IMR-90 (cell line): ENCODE measurements at regions of chr5 and their contacts with region 1.

Region 1: GRCh38 chr5:68239487-68239886 is 23.9 kb downstream of the PIK3R1 start:
- DNase-seq: peak; percentile 90
- ATAC-seq: peak; percentile 79
- H3K4me3 ChIP-seq: no peak overlapping the region
- H3K27ac ChIP-seq: no peak overlapping the region
- H3K4me1 ChIP-seq: peaks cover 5% of the 10 kb centered on the region
- H3K27me3 ChIP-seq: no peaks in the 10 kb centered on the region
- CTCF ChIP-seq: no peak
- POLR2A ChIP-seq: no peak
- RAD21 ChIP-seq: peak; percentile 14

Region 2: DNA sequence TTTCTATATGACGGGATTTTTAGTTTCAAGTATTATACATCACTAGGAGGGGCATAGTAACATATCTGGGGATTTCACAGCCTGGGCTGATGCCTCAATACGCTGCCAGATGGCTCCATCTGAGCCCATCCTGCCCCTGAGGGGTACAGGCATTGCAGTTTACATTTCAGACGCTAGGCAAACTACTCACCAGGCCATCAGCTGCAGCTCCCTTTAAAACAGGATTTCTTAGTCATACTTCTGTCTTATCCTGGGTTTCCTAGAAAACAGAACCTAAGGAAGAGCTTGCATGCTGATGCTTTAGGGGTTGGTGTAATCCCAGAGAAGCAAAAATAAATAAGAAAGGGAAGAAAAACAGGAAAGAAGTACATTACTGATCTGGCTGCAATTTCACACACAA is 396.7 kb before region 1 on chr5:
- CTCF ChIA-PET with region 1: no interaction called
- POLR2A ChIA-PET with region 1: no interaction called
- dilution Hi-C with region 1: no loop called
- in situ Hi-C with region 1: no loop called
- intact Hi-C with region 1: loop called (anchors 10 kb)
- DNase-seq: no peak
- ATAC-seq: no peak
- H3K4me3 ChIP-seq: no peak overlapping the region
- H3K27ac ChIP-seq: no peak overlapping the region
- H3K4me1 ChIP-seq: no peaks in the 10 kb centered on the region
- H3K27me3 ChIP-seq: no peaks in the 10 kb centered on the region
- CTCF ChIP-seq: no peak
- POLR2A ChIP-seq: no peak
- RAD21 ChIP-seq: no peak

Region 3: DNA sequence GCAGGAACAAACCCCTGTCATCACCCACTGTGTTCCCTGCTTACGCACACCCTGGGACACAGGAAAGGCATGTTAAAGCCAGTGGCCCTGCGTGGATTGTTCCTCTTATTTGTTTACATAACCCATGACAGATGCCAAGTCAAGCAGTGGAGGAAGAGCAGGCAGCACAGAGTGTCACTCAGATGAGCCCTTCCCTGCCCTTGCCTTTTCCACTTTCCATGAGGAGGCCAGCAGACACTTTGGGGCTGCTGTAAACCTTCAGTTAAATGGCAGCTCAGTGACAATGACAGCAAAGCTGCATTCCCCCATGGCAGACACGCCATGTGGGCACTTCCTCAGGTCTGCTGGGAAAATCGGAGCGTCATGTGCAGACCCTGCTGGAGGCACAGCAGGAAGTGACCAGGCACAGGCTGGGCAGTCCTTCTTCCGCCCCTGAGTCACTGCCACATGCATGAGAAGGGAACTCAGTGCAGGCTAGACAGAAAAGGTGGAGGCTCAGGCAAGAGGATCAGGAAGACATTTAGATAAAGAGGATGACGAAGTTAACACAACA is 240.7 kb before region 1 on chr5:
- CTCF ChIA-PET with region 1: no interaction called
- POLR2A ChIA-PET with region 1: no interaction called
- dilution Hi-C with region 1: no loop called
- in situ Hi-C with region 1: no loop called
- intact Hi-C with region 1: no loop called
- DNase-seq: peak; percentile 38
- ATAC-seq: no peak
- H3K4me3 ChIP-seq: no peak overlapping the region
- H3K27ac ChIP-seq: no peak overlapping the region
- H3K4me1 ChIP-seq: peaks cover 2% of the 10 kb centered on the region; the same call in 1 of the 2 replicates
- H3K27me3 ChIP-seq: no peaks in the 10 kb centered on the region
- CTCF ChIP-seq: no peak
- POLR2A ChIP-seq: no peak
- RAD21 ChIP-seq: no peak